Activated CD4-positive, alpha-beta T cell treated with anti-CD3 and anti-CD28 coated beads, Interleukin-2, amount 10 ng/mL, durations not matched to agents 24 days and 14 days (primary cell): ENCODE measurements at regions of chr9 and their contacts with region 1.

Region 1: GRCh38 chr9:114291064-114291474 is 31.8 kb upstream of the ORM1 start:
- DNase-seq: peak; percentile 91
- H3K4me3 Mint-ChIP-seq: no peak overlapping the region
- H3K27ac Mint-ChIP-seq: no peak overlapping the region
- H3K4me1 Mint-ChIP-seq: peaks cover 3% of the 10 kb centered on the region
- H3K27me3 Mint-ChIP-seq: peaks cover 2% of the 10 kb centered on the region

Region 2: DNA sequence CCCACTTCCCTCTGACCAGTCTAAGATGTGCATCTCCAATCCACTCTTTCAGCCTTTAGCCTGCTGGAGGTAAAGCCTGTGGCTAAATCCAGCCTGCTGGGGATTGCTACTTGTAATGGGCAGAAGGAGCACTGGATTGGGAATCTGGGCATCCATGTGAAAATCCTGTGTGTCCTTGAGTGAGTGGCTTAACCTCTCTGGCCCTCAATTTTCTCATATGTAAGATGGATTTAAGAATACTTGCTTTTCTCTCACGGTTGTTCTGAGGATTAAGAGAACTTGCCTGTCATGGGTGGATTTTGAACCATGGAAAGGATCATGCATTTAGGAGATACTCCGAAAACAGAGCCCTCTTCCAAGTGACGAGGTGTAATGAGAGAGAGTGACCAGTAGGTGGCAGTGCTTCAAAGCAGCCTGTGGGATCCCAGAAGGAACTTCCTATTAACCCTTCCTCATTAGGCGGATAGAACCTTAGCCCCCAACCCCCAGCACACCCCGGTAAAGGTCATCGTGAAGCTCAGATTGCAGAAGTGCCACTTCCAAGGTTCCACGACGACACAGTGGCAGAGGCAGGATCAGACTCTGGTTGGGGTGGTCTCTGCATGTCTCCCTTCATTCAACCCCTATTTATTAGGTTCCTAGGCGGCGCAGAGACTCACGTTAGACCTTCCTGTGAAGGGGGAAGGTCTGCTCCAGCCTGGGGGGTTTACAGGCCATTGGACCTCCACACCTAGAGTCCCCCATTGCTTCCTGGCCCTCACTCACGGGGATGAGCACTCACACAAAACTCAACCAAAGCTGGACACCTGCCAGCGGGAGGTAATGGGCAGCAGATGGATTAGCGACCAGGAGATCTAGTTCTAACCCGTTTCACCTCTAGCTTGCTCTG is 483.7 kb before region 1 on chr9:
- intact Hi-C with region 1: loop called (anchors 10 kb)
- DNase-seq: peak; percentile 79
- H3K4me3 Mint-ChIP-seq: no peak overlapping the region
- H3K27ac Mint-ChIP-seq: no peak overlapping the region
- H3K4me1 Mint-ChIP-seq: no peaks in the 10 kb centered on the region
- H3K27me3 Mint-ChIP-seq: peaks cover 10% of the 10 kb centered on the region

Region 3: GRCh38 chr9:113943112-113944009 is 347.7 kb before region 1 on chr9:
- intact Hi-C with region 1: no loop called
- DNase-seq: no peak
- H3K4me3 Mint-ChIP-seq: no peak overlapping the region
- H3K27ac Mint-ChIP-seq: no peak overlapping the region
- H3K4me1 Mint-ChIP-seq: no peaks in the 10 kb centered on the region
- H3K27me3 Mint-ChIP-seq: peaks cover 12% of the 10 kb centered on the region

Region 4: DNA sequence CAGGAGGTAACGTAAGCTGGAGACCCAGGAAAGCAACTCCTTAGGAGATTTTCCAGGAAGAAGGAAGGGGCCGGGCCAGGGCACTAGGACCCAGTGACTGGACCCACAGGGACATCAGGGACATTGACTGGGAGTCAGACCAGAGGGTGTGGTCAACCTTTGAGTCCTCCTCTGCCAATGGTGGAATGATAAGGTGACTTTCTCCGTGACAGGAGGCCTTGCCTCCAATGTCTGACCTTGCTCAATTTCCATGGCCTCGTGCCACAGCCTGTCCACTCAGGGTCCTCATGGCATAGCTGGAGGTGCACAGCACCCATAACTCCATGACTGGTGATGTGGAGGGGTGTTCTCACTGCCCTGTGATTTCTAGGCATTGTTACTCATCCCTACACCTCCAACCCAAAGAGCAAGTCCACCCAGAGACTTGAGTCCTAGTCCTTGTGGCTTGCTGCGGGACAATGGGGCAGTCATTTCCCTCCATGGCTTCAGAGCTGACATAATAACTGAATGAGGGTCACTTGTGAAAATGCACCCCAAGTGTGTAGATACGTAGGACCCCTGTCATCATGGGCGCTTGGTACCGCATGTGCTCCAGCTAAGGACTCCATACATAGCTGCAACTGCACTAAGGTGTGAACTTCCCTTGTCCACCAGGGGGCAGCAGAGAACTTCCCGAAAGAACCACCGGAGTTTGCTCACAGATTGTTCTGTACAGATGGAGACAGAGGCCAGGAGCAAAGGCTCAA is 208.9 kb before region 1 on chr9:
- intact Hi-C with region 1: loop called (anchors 1 kb)
- DNase-seq: peak; percentile 94
- H3K4me3 Mint-ChIP-seq: no peak overlapping the region
- H3K27ac Mint-ChIP-seq: no peak overlapping the region
- H3K4me1 Mint-ChIP-seq: peaks cover 2% of the 10 kb centered on the region
- H3K27me3 Mint-ChIP-seq: peaks cover 3% of the 10 kb centered on the region

Region 5: GRCh38 chr9:114108016-114108833 is 182.8 kb before region 1 on chr9:
- intact Hi-C with region 1: loop called (anchors 1 kb)
- DNase-seq: peak; percentile 88
- H3K4me3 Mint-ChIP-seq: no peak overlapping the region
- H3K27ac Mint-ChIP-seq: no peak overlapping the region
- H3K4me1 Mint-ChIP-seq: no peaks in the 10 kb centered on the region
- H3K27me3 Mint-ChIP-seq: peaks cover 35% of the 10 kb centered on the region

Region 6: GRCh38 chr9:114155263-114155972 is 135.7 kb before region 1 on chr9 and contains the start of gene COL27A1:
- intact Hi-C with region 1: loop called (anchors 1 kb)
- DNase-seq: peak; percentile 95
- H3K4me3 Mint-ChIP-seq: peak within 1 kb of the TSS; percentile 98
- H3K27ac Mint-ChIP-seq: peak within 1 kb of the TSS; percentile 92
- H3K4me1 Mint-ChIP-seq: peaks cover 16% of the 10 kb centered on the region
- H3K27me3 Mint-ChIP-seq: peaks cover 43% of the 10 kb centered on the region
- total RNA-seq, gene COL27A1: 8.5 and 9.7 TPM in 2 replicates